ENCODE measurements at regions of chr12 and their contacts with region 1.

Region 1: GRCh38 chr12:132651444-132652100 is 33.0 kb downstream of the P2RX2 start:
- DNase-seq: no peak
- H3K4me3 ChIP-seq: no peak overlapping the region
- H3K27ac ChIP-seq: no peak overlapping the region
- H3K27me3 ChIP-seq: no peaks in the 10 kb centered on the region
- CTCF ChIP-seq: no peak

Region 2: DNA sequence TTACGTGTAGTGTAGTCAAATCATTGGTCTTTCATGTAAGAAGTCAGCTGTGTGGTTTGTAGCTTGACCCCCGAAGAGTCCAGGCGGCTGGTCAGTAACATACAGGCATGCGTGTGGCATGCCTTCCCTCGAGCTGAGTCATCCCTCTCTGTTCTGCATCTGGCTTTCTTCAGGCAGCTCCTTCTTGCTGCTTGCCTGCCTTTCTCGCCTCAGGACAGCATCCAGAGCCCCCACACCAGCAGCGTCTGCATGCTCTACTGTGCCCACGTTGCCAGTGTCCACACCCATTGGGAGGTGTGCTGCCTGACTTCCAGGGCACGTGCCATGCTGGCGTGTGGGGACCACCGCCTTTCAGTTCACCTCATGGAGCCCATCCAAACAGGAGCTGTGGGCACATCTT is 605.0 kb before region 1 on chr12:
- CTCF ChIA-PET with region 1: no interaction called
- POLR2A ChIA-PET with region 1: no interaction called
- DNase-seq: peak; percentile 94
- H3K4me3 ChIP-seq: no peak overlapping the region
- H3K27ac ChIP-seq: peak overlapping the region; percentile 77
- H3K27me3 ChIP-seq: no peaks in the 10 kb centered on the region
- CTCF ChIP-seq: no peak

Region 3: GRCh38 chr12:132582058-132582420 is 69.5 kb before region 1 on chr12:
- CTCF ChIA-PET with region 1: no interaction called
- POLR2A ChIA-PET with region 1: no interaction called
- DNase-seq: no peak
- H3K4me3 ChIP-seq: no peak overlapping the region
- H3K27ac ChIP-seq: no peak overlapping the region
- H3K27me3 ChIP-seq: peaks cover 5% of the 10 kb centered on the region
- CTCF ChIP-seq: no peak

Region 4: GRCh38 chr12:132632501-132633228 is 18.9 kb before region 1 on chr12:
- CTCF ChIA-PET with region 1: interaction called, 13 read pairs
- POLR2A ChIA-PET with region 1: interaction called, 16 read pairs
- DNase-seq: no peak
- H3K4me3 ChIP-seq: no peak overlapping the region
- H3K27ac ChIP-seq: no peak overlapping the region
- H3K27me3 ChIP-seq: no peaks in the 10 kb centered on the region
- CTCF ChIP-seq: no peak

Measured in AG04450 (cell line).